Mammary epithelial cell (primary cell): ENCODE measurements at regions of chr1 and their contacts with region 1.

Region 1: GRCh38 chr1:222140206-222140605 is 398.3 kb upstream of the DUSP10 start:
- DNase-seq: no peak
- H3K4me3 ChIP-seq: no peak overlapping the region
- H3K27ac ChIP-seq: no peak overlapping the region
- H3K4me1 ChIP-seq: no peaks in the 10 kb centered on the region
- H3K27me3 ChIP-seq: no peaks in the 10 kb centered on the region
- CTCF ChIP-seq: no peak

Region 2: DNA sequence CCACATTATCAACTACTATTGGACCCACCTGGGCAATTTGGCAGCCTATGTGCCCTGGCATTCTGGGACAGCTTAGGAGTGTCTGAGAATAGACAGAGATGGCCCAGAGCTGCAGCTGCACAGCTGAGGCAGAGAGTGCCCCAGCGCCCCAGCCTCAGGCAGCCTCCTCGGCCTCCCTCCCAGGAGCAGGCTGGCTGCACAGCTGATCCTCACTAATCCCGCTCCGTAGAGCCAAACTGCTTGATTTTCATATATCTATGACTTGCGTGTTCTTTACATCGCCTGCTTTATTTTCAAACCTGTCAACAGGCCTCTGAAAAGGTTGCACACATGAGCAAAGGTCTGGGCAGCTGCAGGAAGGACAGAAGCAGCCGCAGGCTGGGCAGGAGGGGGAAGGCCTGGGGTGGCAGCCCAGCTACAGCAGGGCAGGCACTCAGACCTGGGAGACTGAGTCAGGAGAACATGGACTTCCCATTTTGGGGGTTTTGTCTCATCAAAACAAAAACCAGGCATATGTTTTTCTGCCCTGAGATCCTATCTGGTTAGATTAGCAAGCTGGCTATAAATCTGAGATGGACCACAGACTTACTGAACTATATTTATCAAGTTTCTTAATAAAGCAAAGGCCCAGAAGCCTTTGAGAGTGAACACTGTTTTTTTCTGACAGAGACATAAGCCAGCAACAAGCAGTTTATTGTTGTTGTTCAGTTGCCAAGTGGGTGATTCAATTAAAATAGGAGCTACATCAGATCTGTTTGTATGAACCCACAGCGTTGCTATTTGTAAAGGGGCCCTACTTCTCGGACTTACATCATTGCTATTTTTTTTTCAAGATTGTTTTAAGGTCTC is 96.5 kb before region 1 on chr1:
- CTCF ChIA-PET with region 1: no interaction called
- dilution Hi-C with region 1: loop called (anchors 5 kb)
- in situ Hi-C with region 1: no loop called
- intact Hi-C with region 1: no loop called
- DNase-seq: peak; percentile 79
- H3K4me3 ChIP-seq: no peak overlapping the region
- H3K27ac ChIP-seq: peak overlapping the region; percentile 26
- H3K4me1 ChIP-seq: peaks cover 13% of the 10 kb centered on the region
- H3K27me3 ChIP-seq: no peaks in the 10 kb centered on the region
- CTCF ChIP-seq: no peak

Region 3: DNA sequence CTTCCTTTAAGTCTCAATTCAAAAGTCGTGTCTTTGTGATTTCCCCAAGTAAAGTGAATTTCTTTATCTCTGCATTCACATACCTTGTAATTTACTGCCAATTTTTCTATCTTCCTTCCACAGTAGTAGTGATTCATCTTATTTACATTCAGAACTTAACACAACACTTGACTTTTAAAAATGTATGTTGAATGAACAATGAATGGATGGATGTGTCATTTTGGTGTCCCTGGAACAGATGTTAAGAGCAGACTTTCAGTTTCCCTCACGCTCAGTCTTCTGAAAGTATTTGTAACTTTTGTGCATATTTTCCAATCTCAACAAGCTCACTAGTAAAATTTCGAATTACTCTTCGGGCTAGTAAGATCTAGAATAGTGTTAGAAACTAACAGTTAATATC is 55.7 kb after region 1 on chr1:
- CTCF ChIA-PET with region 1: no interaction called
- dilution Hi-C with region 1: no loop called
- in situ Hi-C with region 1: no loop called
- intact Hi-C with region 1: no loop called
- DNase-seq: no peak
- H3K4me3 ChIP-seq: no peak overlapping the region
- H3K27ac ChIP-seq: no peak overlapping the region
- H3K4me1 ChIP-seq: no peaks in the 10 kb centered on the region
- H3K27me3 ChIP-seq: no peaks in the 10 kb centered on the region
- CTCF ChIP-seq: no peak